A673 (cell line): ENCODE measurements at regions of chr20 and their contacts with region 1.

Region 1: DNA sequence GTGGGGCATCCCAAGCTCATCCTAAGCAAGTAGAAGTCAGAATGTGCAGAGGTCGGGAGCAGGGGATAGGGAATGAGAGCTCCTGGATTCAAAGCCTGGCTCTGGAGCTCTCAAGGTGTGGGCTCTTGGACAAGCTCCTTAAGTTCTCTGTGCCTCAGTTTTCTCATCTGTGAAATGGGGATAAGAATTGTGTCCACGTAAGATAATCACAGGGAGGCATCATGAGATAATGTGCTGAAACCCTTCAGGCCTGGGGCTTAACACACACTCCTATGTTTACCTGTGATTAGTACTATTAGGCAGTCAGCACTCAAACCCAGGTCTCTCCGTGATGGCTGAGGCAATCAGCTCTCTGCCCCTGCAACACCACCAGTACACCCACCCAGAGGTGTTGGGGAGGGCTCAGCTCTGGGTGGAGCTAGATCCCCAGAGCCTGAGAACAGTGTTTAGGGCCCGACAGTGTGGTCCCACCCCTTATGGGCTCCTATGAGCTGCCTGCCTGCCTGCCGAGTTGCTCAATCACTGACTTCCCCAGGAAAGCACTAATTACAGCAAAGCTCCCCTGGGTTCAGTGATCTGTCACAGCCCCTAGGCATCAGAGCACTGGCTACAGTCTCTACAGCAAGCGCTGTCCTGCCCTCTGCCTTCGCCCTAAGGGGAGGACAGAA is 6.3 kb upstream of the SIRPA start:
- DNase-seq: peak; percentile 94
- H3K4me3 ChIP-seq: no peak overlapping the region
- H3K27ac ChIP-seq: peak overlapping the region; percentile 74
- H3K4me1 ChIP-seq: peaks cover 62% of the 10 kb centered on the region
- H3K27me3 ChIP-seq: no peaks in the 10 kb centered on the region
- CTCF ChIP-seq: no peak

Region 2: DNA sequence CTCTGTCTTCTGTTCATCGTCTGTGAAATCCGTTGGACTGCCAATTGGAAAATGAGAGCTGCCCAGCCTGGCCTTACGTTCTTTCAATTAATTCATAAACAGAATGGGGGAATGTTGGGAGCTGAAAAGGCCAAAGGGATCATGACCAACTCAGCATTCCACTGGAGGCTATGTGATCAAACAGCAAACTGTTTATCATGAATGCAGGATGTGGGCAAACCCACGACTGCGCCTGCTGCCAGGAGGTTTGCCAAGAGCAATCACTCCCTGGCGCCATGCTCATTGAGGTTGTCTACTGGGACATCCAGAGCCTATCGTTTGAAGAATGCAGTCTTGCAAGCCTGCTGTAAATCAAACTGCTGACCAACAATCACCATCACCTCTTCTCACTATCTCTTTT is 486.8 kb before region 1 on chr20:
- CTCF ChIA-PET with region 1: no interaction called
- POLR2A ChIA-PET with region 1: interaction called, 10 read pairs
- intact Hi-C with region 1: no loop called
- DNase-seq: no peak
- H3K4me3 ChIP-seq: no peak overlapping the region
- H3K27ac ChIP-seq: no peak overlapping the region
- H3K4me1 ChIP-seq: no peaks in the 10 kb centered on the region
- H3K27me3 ChIP-seq: peaks cover 12% of the 10 kb centered on the region
- CTCF ChIP-seq: no peak

Region 3: GRCh38 chr20:1802385-1803060 is 86.4 kb before region 1 on chr20:
- CTCF ChIA-PET with region 1: interaction called, 3 read pairs
- POLR2A ChIA-PET with region 1: no interaction called
- intact Hi-C with region 1: loop called (anchors 2 kb)
- DNase-seq: peak; percentile 90
- H3K4me3 ChIP-seq: peak overlapping the region; percentile 62
- H3K27ac ChIP-seq: peak overlapping the region; percentile 85
- H3K4me1 ChIP-seq: peaks cover 45% of the 10 kb centered on the region
- H3K27me3 ChIP-seq: no peaks in the 10 kb centered on the region
- CTCF ChIP-seq: peak; percentile 87

Region 4: GRCh38 chr20:1993986-1994385 is 105.1 kb after region 1 on chr20 and contains the start of gene PDYN:
- CTCF ChIA-PET with region 1: no interaction called
- POLR2A ChIA-PET with region 1: no interaction called
- intact Hi-C with region 1: no loop called
- DNase-seq: no peak
- H3K4me3 ChIP-seq: no peak within 1 kb of the TSS
- H3K27ac ChIP-seq: no peak within 1 kb of the TSS
- H3K4me1 ChIP-seq: no peaks in the 10 kb centered on the region
- H3K27me3 ChIP-seq: peaks cover 48% of the 10 kb centered on the region
- CTCF ChIP-seq: no peak
- total RNA-seq, gene PDYN: not detected in 2 replicates